GM13976 (cell line): ENCODE measurements at regions of chr22 and their contacts with region 1.

Region 1: GRCh38 chr22:45645526-45646414 is 25.9 kb upstream of the ATXN10 start:
- DNase-seq: peak; percentile 93
- CTCF ChIP-seq: peak; percentile 96

Region 2: DNA sequence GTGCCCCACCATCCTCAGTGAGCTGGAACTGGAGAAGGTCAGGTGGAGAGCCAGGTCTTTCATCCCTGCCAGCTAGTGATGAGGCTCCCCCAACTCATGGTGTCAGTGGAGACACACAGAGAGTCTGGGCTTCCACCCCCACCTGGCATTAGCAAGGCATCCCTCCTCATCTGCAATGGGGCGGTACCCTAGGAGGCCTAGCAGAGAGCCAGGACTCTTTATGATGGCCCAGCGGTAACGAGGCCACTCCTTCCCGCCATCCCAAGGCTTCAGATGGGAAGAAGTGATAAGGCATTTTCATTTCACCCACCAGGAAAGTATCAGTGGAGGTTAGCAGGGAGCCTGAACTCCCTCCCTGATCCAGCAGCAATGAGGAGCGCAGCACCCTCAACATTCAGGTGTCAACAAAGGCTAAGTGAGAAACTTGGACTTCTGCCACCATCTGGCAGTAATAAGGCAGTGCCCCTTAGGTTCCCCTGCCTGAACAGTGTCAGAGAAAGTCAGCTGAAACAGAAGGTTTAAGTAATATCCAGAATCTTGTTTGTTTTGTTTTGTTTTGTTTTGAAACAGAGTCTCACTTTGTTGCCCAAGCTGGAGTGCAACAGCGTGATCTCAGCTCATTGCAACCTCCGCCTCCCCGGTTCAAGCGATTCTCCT is 183.6 kb before region 1 on chr22:
- in situ Hi-C with region 1: no loop called
- DNase-seq: no peak
- CTCF ChIP-seq: no peak

Region 3: DNA sequence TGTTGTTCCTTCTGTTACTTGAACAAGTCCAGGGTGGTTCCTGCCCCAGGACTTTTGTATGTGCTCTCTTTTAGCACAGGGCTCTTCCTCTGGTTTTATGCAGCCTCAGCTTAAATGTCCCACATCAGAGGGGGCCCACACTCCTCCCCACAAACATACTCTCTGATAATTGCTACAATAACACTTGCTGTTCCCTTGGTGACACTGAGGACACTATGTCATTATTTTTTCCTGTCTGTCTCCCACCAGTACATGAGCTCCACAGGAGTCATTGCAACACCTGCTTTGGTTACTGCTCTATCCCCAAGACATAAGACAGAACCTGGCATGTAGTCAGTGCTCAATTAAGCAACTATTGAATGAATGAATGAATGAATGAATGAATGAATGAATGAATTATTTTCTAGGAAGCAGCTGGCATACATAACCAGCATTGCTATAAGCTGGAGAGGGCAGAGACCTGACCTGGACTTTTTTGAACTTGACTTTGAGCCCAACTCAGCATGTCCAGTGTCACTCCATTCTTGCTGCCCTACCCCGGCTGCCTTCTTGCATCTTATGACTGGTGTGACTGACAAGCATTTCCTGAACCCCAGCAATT is 338.6 kb after region 1 on chr22:
- in situ Hi-C with region 1: loop called (anchors 10 kb)
- DNase-seq: no peak
- CTCF ChIP-seq: no peak